Lower lobe of right lung (tissue), 2 donors: ENCODE measurements at regions of chr20 and their contacts with region 1.

Region 1: DNA sequence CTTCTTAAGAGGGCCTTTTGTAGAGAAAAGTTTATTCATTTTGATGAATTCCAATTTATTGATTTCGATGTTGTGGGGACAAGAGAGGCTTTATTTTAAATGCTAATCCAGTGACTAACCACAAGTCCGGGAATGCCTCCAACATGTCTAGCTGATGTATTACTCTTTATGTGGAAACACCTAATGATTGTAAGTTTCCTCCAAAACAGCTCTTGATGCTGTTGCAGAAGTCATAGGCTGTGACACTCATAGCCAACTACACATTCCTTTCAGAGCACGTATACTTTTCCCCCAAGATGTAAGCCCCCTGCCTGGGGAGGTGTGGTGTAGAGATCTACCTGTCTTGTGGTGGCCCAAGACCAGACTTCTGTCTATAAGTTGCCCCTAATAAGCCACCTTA is 61.3 kb upstream of the RNF24 start:
- DNase-seq: no peak
- ATAC-seq: no peak
- H3K4me3 ChIP-seq: no peak overlapping the region
- H3K27ac ChIP-seq: no peak overlapping the region
- H3K4me1 ChIP-seq: peaks cover 7% of the 10 kb centered on the region
- H3K27me3 ChIP-seq: no peaks in the 10 kb centered on the region
- CTCF ChIP-seq: no peak

Region 2: GRCh38 chr20:4014031-4014474 is 62.6 kb before region 1 on chr20:
- intact Hi-C with region 1: loop called (anchors 10 kb)
- DNase-seq: no peak
- ATAC-seq: peak; percentile 68 to 81
- H3K4me3 ChIP-seq: peak overlapping the region; percentile 82
- H3K27ac ChIP-seq: peak overlapping the region; percentile 39
- H3K4me1 ChIP-seq: peaks cover 48% of the 10 kb centered on the region
- H3K27me3 ChIP-seq: no peaks in the 10 kb centered on the region
- CTCF ChIP-seq: peak; percentile 52

Region 3: DNA sequence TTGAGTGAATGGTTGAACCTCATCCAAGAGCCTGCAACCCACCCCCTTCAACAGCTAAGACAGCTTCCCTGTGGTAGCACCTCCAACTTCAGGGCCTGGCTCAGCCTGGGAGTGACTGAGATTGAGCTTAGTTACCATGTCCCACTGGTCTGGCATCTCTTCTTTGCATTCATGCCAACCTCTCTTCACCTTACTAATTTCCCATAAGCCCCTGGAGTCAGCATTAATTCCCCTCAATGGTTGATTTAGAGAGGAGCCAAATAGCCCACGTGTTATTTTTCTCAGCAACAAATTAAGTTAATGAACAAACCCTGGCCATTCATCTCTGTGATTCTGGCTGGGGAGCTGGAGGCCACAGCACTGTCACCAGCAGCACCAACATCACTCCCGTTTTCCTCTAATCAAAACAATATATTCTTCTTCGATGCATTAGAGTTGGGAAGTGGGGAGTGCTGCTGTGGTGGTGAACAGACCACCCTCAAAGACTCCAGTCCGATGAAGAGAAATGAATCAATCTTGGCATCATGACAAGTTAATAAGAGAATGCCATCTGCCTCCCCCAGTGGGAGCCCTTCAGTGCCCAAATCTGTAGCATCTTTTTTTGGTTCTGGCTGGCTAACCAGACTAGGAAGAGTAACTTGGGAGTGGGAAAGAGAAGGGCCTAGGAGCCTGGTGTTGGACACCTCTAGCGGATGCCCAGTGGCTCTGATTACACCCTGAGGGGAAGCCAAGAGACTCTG is 255.6 kb after region 1 on chr20:
- intact Hi-C with region 1: no loop called
- DNase-seq: no peak
- ATAC-seq: no peak
- H3K4me3 ChIP-seq: no peak overlapping the region
- H3K27ac ChIP-seq: no peak overlapping the region
- H3K4me1 ChIP-seq: no peaks in the 10 kb centered on the region
- H3K27me3 ChIP-seq: peaks cover 6% of the 10 kb centered on the region
- CTCF ChIP-seq: no peak